T-cell (primary cell): ENCODE measurements at regions of chr7 and their contacts with region 1.

Region 1: DNA sequence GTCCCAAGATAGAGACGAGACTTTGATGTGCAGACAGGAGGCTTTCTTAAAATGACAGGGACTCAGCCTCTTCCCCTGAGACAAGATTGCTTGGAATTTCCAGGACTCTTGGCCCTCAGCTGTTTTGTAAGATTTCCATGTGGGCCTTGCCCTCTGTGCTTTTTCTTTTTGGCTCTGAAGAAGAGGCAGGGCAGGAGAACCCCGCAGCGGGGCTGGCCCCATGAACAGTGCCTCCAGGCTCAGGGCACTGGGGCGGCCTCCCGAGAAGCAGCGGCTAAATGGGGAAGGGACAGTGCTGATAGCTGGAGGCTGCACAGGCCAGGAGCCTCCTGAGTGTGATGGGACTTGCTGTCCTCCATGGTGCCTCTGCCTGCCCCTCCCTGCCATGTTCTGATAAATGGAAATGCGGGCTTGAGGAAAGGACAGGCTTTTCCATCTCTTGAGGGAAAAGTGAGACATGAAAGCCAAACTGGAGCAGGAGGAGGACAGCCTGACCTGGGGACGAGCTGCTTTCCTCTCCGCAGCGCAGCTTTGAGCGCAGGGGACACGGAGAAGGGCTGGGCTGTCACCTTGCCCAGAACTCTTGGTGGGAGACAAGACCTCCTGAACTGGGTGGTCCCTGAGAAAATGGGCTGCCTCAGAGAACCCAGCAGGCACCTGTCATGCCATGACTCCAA is 12.1 kb downstream of the SAP25 start:
- DNase-seq: no peak
- ATAC-seq: no peak
- H3K4me3 ChIP-seq: no peak overlapping the region
- H3K4me3 Mint-ChIP-seq: no peak overlapping the region
- H3K27ac ChIP-seq: no peak overlapping the region
- H3K27ac Mint-ChIP-seq: no peak overlapping the region
- H3K4me1 ChIP-seq: peaks cover 0 to 18% of the 10 kb centered on the region in 2 experiments
- H3K4me1 Mint-ChIP-seq: peaks cover 15 to 25% (median 16%) of the 10 kb centered on the region in 3 donors
- H3K27me3 ChIP-seq: no peaks in the 10 kb centered on the region
- H3K27me3 Mint-ChIP-seq: no peaks in the 10 kb centered on the region

Region 2: DNA sequence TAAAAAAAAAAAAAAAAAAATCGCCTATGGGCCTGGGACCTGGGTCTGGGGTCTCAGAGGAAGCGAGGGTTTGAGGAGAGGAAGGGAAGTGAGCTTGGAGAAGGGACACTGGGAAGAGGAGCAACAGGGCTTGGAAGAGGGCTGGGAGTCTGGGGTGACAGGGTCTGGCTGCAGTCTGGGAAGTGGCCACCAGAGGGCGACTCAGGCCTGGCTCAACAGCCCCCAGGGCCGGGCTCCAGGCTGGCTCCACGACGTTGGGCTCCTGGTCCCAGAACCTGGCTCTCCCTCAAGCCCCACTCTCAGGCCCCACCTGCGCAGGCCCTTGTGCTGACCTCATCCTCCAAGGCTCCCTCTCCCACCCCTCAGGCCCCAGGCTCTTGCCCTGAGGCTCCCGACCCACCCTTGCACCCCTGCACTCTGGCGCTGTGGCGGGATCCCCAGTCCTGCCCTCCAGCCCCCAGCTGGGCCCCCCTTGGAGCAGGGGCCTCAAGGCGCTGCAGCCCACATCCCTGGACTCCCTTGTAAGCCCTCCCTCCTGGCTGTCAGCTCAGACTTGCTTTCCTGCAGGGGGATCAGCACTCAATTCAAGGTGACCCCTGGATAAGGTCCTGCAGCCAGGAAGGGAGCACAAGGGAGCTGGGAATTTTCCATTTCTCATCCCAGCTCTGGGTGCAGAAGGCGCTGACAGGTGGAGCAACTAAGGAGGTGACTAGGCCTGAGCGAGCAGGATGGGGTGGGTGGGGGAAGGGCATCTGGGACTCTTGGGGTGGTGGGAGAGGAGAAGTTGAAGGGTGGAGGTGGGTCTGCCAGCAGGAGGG is 92.2 kb before region 1 on chr7:
- CTCF ChIA-PET with region 1: interaction called, 11 to 17 read pairs
- POLR2A ChIA-PET with region 1: no interaction called
- DNase-seq: peak; percentile 40 to 90 (median 76)
- ATAC-seq: peak; percentile 83 to 93 (median 89)
- H3K4me3 ChIP-seq: no peak overlapping the region
- H3K4me3 Mint-ChIP-seq: no peak overlapping the region
- H3K27ac ChIP-seq: peak overlapping the region; percentile 18
- H3K27ac Mint-ChIP-seq: peak overlapping the region; percentile 70 to 73
- H3K4me1 ChIP-seq: peaks cover 8 to 46% of the 10 kb centered on the region in 2 experiments
- H3K4me1 Mint-ChIP-seq: peaks cover 23 to 37% (median 36%) of the 10 kb centered on the region in 3 donors
- H3K27me3 ChIP-seq: no peaks in the 10 kb centered on the region
- H3K27me3 Mint-ChIP-seq: no peaks in the 10 kb centered on the region

Region 3: DNA sequence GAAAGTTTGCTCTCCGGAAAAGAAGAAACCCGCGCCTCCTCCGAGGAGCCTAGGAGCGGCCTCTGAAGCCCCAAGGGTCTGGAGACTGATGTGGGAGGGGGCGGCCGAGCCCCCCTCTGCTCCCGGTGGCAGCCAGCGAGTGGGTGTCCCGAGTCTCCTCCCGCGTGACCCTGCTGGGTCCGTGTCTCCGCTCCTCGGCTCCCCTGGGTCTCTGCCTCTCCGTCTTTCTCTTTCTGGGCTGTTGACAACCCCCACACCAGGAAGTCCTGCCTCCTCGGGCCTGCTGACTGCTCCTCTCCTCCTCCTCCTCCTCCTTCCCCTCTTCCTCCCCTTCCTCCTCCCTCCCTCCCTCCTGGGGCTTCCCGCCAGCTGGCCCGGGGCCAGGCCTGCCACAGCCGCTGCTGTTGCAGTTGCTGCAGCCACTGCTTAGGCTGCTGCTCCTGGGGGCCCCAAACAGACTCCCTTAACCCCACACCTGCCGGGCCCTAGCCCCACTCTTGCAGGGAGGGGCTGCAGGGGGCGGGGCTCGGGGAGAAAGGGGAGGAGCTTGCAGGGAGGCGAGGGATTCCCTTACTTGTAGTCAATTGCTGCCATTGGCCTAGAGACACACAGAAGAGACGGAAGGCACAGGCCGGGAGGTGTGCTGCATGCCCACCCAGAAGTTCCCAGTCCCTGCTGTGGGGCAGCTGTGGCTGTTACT is 82.5 kb before region 1 on chr7 and contains the start of gene TSC22D4:
- CTCF ChIA-PET with region 1: interaction called, 5 to 14 read pairs
- POLR2A ChIA-PET with region 1: no interaction called
- DNase-seq: peak; percentile 85 to 95 (median 92)
- ATAC-seq: peak; percentile 72 to 78 (median 76)
- H3K4me3 ChIP-seq: peak within 1 kb of the TSS; percentile 98 to 100
- H3K4me3 Mint-ChIP-seq: peak within 1 kb of the TSS; percentile 91 to 97 (median 92)
- H3K27ac ChIP-seq: peak within 1 kb of the TSS; percentile 66
- H3K27ac Mint-ChIP-seq: peak within 1 kb of the TSS; percentile 91
- H3K4me1 ChIP-seq: peaks cover 24 to 61% of the 10 kb centered on the region in 2 experiments
- H3K4me1 Mint-ChIP-seq: peaks cover 45 to 49% (median 46%) of the 10 kb centered on the region in 3 donors
- H3K27me3 ChIP-seq: peaks cover 0 to 3% of the 10 kb centered on the region in 2 experiments
- H3K27me3 Mint-ChIP-seq: no peaks in the 10 kb centered on the region
- total RNA-seq, gene TSC22D4: 85.2 to 160 (median 148) TPM

Region 4: GRCh38 chr7:100538654-100539435 is 22.8 kb before region 1 on chr7 and contains the start of gene AGFG2:
- CTCF ChIA-PET with region 1: interaction called, 4 to 13 read pairs
- POLR2A ChIA-PET with region 1: no interaction called
- DNase-seq: peak; percentile 99 to 100 (median 100)
- ATAC-seq: peak; percentile 93 to 97 (median 96)
- H3K4me3 ChIP-seq: peak within 1 kb of the TSS; percentile 71 to 85
- H3K4me3 Mint-ChIP-seq: peak within 1 kb of the TSS; percentile 96 to 99 (median 99)
- H3K27ac ChIP-seq: peak within 1 kb of the TSS; percentile 40
- H3K27ac Mint-ChIP-seq: peak within 1 kb of the TSS; percentile 83 to 93
- H3K4me1 ChIP-seq: peaks cover 13 to 46% of the 10 kb centered on the region in 2 experiments
- H3K4me1 Mint-ChIP-seq: peaks cover 47 to 54% (median 50%) of the 10 kb centered on the region in 3 donors
- H3K27me3 ChIP-seq: no peaks in the 10 kb centered on the region
- H3K27me3 Mint-ChIP-seq: no peaks in the 10 kb centered on the region
- total RNA-seq, gene AGFG2: 26.2 to 54.6 (median 40.2) TPM

Region 5: GRCh38 chr7:100545360-100546128 is 16.1 kb before region 1 on chr7:
- CTCF ChIA-PET with region 1: interaction called, 6 to 14 read pairs
- POLR2A ChIA-PET with region 1: no interaction called
- DNase-seq: peak in 7 of 35 experiments; percentile 21 to 55 (median 37)
- ATAC-seq: peak; percentile 51 to 71 (median 69)
- H3K4me3 ChIP-seq: peak overlapping the region in 1 of 2 donors; percentile 19
- H3K4me3 Mint-ChIP-seq: peak overlapping the region; percentile 76 to 99 (median 99)
- H3K27ac ChIP-seq: peak overlapping the region; percentile 76
- H3K27ac Mint-ChIP-seq: peak overlapping the region; percentile 98
- H3K4me1 ChIP-seq: peaks cover 46 to 98% of the 10 kb centered on the region in 2 experiments
- H3K4me1 Mint-ChIP-seq: peaks cover 91 to 97% (median 94%) of the 10 kb centered on the region in 3 donors
- H3K27me3 ChIP-seq: no peaks in the 10 kb centered on the region
- H3K27me3 Mint-ChIP-seq: no peaks in the 10 kb centered on the region

Region 6: DNA sequence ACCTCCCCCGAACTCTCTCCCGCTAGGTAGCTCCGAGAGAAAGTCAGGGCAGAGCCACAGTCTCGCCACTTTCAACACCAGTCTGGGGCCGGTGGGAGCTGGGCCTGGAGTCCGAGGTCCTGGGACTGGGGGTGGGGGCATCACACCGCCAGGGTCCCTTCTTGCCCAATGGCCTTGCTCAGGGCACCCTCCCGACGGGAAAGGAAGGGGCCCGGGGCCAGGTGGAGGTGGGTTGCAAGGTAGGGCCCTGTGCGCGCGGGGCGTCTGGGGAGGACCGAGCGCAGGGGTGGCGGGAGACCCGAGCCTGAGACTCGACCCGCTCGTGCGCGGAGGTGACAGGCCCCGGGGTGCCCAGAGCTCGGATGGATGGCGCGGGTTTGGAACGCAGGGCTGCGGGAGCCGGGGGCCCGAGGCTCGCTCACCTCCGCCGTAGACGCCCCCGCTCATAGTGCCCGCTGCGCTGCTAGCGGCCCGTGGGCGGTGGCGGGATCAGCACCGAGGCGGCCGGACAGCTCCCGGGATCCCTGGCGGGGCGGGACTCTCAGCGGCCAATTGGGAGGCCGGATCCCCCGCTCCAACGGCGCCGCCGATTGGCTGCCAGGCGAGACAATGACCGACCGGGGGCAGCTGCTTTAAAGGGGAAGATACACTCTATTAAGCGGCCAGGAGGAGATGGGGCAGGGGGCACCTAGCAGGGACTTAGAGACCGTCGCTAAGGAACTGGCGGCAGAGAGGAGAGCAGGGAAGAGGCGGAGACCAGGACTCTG is 94.5 kb after region 1 on chr7 and contains the start of gene ACTL6B:
- CTCF ChIA-PET with region 1: interaction called in 1 of 2 experiments, 10 read pairs
- POLR2A ChIA-PET with region 1: no interaction called
- DNase-seq: peak in 22 of 35 experiments; percentile 14 to 60 (median 48)
- ATAC-seq: peak; percentile 49 to 79 (median 58)
- H3K4me3 ChIP-seq: no peak within 1 kb of the TSS
- H3K4me3 Mint-ChIP-seq: no peak within 1 kb of the TSS
- H3K27ac ChIP-seq: no peak within 1 kb of the TSS
- H3K27ac Mint-ChIP-seq: no peak within 1 kb of the TSS
- H3K4me1 ChIP-seq: peaks cover 0 to 9% of the 10 kb centered on the region in 2 experiments
- H3K4me1 Mint-ChIP-seq: peaks cover 0 to 2% (median 2%) of the 10 kb centered on the region in 3 donors
- H3K27me3 ChIP-seq: peaks cover 8 to 81% of the 10 kb centered on the region in 2 experiments
- H3K27me3 Mint-ChIP-seq: peaks cover 37 to 53% of the 10 kb centered on the region in 2 donors
- total RNA-seq, gene ACTL6B: not detected